ENCODE measurements at regions of chr15 and their contacts with region 1.

Region 1: GRCh38 chr15:51192521-51193280 is 98.0 kb upstream of the TNFAIP8L3 start:
- DNase-seq: peak; percentile 83 to 93 (median 91)
- H3K4me3 ChIP-seq: no peak overlapping the region
- H3K27ac ChIP-seq: no peak overlapping the region
- H3K4me1 ChIP-seq: no peaks in the 10 kb centered on the region
- H3K27me3 ChIP-seq: no peaks in the 10 kb centered on the region
- CTCF ChIP-seq: peak; percentile 74 to 88 (median 80)
- EP300 ChIP-seq: no peak
- POLR2A ChIP-seq: no peak

Region 2: DNA sequence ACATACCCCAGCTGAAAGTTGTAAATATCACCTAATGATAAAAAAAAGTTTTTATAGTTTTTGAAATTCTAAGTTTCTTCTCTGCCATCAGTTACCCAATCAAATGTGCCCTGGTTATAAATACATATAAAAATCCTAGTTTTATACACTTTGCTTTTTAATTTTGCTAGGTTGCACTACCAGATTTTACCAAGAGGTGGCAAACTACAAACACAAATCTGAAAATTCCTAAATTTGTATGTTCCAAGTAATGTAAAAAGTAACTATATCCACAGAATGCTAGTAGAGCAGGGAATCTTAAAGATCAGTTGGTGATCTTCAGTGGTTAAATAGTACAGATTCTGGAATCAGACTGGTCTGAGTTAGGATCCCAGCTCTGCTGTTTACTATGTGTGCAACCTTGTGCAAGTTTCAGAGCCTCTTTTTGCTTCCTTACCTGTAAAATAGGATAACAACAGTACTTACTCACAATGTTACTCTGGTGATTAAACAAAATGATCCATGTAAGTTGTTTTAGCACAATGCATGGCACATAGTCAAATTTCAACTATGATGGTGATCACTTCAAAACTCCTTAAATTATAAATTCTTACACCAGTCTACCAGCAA is 517.1 kb before region 1 on chr15:
- intact Hi-C with region 1: loop called in 1 of 4 experiments (anchors 10 kb)
- DNase-seq: no peak
- H3K4me3 ChIP-seq: no peak overlapping the region
- H3K27ac ChIP-seq: no peak overlapping the region
- H3K4me1 ChIP-seq: peaks cover 1% of the 10 kb centered on the region
- H3K27me3 ChIP-seq: no peaks in the 10 kb centered on the region
- CTCF ChIP-seq: peak; percentile 43 to 70 (median 60)
- EP300 ChIP-seq: no peak
- POLR2A ChIP-seq: no peak

Region 3: GRCh38 chr15:50908210-50909009 is 284.3 kb before region 1 on chr15 and contains the start of gene AP4E1:
- intact Hi-C with region 1: loop called in 1 of 4 experiments (anchors 10 kb)
- DNase-seq: peak; percentile 88 to 95 (median 93)
- H3K4me3 ChIP-seq: peak within 1 kb of the TSS; percentile 73
- H3K27ac ChIP-seq: peak within 1 kb of the TSS; percentile 77 to 86
- H3K4me1 ChIP-seq: peaks cover 7% of the 10 kb centered on the region
- H3K27me3 ChIP-seq: no peaks in the 10 kb centered on the region
- CTCF ChIP-seq: peak; percentile 96 to 98 (median 97)
- EP300 ChIP-seq: no peak
- POLR2A ChIP-seq: peak; percentile 62
- total RNA-seq, gene AP4E1: 3.7 to 12.7 (median 8.6) TPM

Region 4: DNA sequence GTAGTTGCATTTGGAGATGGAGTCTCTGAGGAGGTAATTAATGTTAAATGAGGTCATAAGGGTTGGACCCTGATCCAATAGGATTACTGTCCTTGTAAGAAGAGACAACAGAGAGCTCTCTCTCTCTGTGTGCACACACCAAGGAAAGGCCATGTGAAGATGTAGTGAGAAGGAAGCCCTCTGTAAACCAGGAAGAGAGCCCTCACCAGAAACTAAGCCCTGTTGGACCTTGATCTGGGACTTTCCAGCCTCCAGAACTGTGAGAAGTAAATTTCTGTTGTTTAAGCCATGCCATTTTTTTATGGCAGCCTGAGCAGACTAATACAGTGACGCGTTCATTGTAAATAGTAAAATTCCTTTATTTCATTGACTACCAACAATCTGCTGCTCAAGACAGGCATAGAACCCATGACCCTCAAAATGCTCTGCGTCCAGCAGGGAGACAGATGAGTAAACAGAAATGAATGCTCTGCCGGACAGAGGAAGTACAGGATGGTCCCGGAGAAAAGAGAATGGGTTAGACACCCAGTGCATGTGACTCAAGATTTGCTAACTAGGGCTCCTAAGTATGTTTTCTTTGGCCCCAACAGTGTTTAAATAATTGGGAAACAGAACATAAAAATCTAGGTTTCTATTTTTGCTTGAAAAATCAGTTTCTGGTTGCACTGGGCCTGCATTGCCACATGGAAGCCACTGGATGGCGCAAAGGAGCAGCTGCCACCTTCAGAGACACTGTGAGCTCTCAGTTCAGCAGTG is 60.1 kb before region 1 on chr15:
- intact Hi-C with region 1: loop called in 1 of 4 experiments (anchors 5 kb)
- DNase-seq: peak; percentile 43 to 82 (median 73)
- H3K4me3 ChIP-seq: no peak overlapping the region
- H3K27ac ChIP-seq: no peak overlapping the region
- H3K4me1 ChIP-seq: peaks cover 4% of the 10 kb centered on the region
- H3K27me3 ChIP-seq: no peaks in the 10 kb centered on the region
- CTCF ChIP-seq: peak in 2 of 3 donors; percentile 52 to 79
- EP300 ChIP-seq: no peak
- POLR2A ChIP-seq: no peak

Region 5: GRCh38 chr15:51162865-51163762 is 29.6 kb before region 1 on chr15:
- intact Hi-C with region 1: loop called in 1 of 4 experiments (anchors 1 kb)
- DNase-seq: peak; percentile 42 to 70 (median 68)
- H3K4me3 ChIP-seq: peak overlapping the region; percentile 25
- H3K27ac ChIP-seq: no peak overlapping the region
- H3K4me1 ChIP-seq: no peaks in the 10 kb centered on the region
- H3K27me3 ChIP-seq: no peaks in the 10 kb centered on the region
- CTCF ChIP-seq: peak; percentile 45 to 65 (median 64)
- EP300 ChIP-seq: no peak
- POLR2A ChIP-seq: no peak

Region 6: DNA sequence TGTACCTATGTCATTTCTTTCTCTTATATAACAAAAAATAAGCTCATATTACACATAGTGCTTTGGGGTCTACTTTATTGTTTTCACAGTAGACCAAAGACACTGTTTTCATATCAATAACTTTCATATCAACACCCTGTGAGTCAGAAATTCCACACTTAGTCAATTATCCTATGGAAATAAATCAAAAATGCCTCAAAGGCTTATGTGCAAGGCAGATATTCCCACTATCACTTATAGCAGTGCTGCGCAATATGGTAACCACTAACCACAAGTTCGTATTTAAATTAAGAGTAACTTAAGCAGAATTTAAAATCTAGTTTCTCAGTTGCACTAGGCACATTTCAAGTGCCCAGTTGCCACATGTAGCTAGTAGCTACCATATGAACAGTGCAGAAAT is 504.5 kb after region 1 on chr15:
- intact Hi-C with region 1: no loop called
- DNase-seq: no peak
- H3K4me3 ChIP-seq: no peak overlapping the region
- H3K27ac ChIP-seq: no peak overlapping the region
- H3K4me1 ChIP-seq: no peaks in the 10 kb centered on the region
- H3K27me3 ChIP-seq: no peaks in the 10 kb centered on the region
- CTCF ChIP-seq: no peak
- EP300 ChIP-seq: no peak
- POLR2A ChIP-seq: no peak